Head of caudate nucleus (tissue), 42 donors: ENCODE measurements at regions of chr22 and their contacts with region 1.

Region 1: GRCh38 chr22:49930739-49931412 is 12.4 kb downstream of the CRELD2 start:
- DNase-seq: peak; percentile 41 to 91 (median 76)

Region 2: DNA sequence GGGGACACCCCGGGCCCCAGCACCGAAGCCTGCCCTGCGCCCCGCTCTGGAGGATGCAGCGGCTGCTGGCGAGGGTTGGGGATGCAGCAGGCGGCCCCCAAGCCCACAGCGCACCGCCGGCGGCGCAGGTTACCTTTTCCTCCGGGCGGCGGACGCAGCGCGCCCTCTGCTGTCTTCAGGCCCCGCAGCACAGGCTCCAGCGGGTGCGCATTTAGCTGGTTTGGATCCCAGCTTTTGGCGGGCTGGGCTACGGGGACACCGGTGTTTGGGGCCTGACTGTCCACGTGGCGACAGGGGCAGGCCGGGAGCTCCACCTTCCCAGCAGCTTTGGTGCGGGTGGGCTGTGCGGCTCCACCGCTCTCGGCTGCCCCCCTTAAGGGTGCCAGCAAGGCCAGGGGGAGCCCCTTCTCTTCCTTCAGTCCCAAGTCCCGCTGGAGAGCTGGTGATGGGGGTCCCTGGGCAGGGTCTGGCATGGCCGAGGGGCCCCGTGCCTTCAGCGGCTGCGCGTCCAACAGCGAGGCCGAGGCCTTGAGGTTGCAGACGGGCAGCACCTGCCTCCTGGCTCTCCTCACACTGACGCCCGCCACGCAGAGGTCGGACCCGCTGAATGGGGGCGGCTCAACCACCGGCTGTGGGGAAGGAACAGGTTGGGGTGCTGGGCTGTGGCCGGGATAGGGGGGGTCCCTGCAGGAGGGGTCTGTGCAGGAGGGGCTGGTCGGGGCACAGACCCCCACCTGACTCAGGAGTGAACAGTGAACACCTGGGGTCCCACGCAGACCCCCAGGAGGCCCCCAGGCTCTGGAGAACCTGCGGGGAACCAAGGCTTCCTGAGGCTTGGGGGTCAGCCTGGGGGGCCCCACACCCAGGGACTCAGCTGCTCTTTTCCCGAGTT is 99.7 kb after region 1 on chr22:
- intact Hi-C with region 1: loop called (anchors 2 kb)
- DNase-seq: peak; percentile 36 to 88 (median 77)